Activated T-helper 1 cell treated with anti-CD3 and anti-CD28 coated beads, Interleukin-12 subunit alpha, Interleukin-12 subunit beta, Interleukin-2, Interleukin-4 antibody, amounts not matched to agents 30 ng/mL and 10 ng/mL and 1 ng/mL, durations not matched to agents 14 hours and 24 hours and 36 hours (primary cell): ENCODE measurements at regions of chr4 and their contacts with region 1.

Region 1: DNA sequence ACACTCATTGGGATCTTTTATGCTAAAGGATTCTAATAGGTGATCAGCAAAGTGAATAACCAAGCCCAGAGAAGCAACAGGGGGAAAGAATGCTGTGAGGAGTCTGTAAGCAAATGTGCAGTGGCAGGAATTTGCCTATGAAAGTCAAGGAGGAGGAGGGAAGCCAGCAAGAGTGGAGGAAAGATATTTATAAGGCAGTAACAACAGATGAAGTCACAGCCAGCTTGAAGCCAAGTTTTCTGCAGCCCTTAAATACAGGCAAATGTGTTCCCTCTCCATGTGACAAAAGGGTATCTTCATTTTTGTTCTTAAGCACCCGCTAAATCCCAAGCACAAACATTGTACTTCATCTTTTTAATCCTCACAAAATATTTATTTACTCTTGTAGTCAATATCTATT is 275.0 kb upstream of the CLNK start:
- DNase-seq: no peak
- H3K4me3 Mint-ChIP-seq: no peak overlapping the region
- H3K27ac Mint-ChIP-seq: no peak overlapping the region
- H3K4me1 Mint-ChIP-seq: peaks cover 13% of the 10 kb centered on the region
- H3K27me3 Mint-ChIP-seq: peaks cover 3% of the 10 kb centered on the region

Region 2: GRCh38 chr4:11196927-11197522 is 237.4 kb after region 1 on chr4:
- intact Hi-C with region 1: no loop called
- DNase-seq: no peak
- H3K4me3 Mint-ChIP-seq: no peak overlapping the region
- H3K27ac Mint-ChIP-seq: no peak overlapping the region
- H3K4me1 Mint-ChIP-seq: no peaks in the 10 kb centered on the region
- H3K27me3 Mint-ChIP-seq: no peaks in the 10 kb centered on the region

Region 3: DNA sequence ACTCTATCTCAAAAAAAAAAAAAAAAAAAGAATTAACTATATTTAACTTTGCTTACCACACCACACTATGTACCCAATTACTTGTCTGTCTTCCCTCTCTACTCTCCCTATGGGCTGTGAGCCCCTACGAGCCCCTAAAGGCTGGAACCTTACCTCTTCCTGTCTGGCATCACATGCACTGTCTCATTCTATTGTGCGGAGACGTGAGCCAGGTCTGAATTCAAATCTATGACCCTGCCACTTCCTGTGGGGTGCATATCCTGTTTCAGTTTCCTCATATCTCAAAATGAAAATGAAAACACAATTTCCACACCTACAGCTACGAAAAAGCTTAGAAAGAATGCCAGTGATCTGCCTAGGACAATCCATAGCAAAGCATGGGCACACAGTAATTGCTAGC is 512.0 kb after region 1 on chr4:
- intact Hi-C with region 1: loop called (anchors 10 kb)
- DNase-seq: peak; percentile 57
- H3K4me3 Mint-ChIP-seq: peak overlapping the region; percentile 69
- H3K27ac Mint-ChIP-seq: peak overlapping the region; percentile 90
- H3K4me1 Mint-ChIP-seq: peaks cover 46% of the 10 kb centered on the region
- H3K27me3 Mint-ChIP-seq: no peaks in the 10 kb centered on the region